A549 (cell line): ENCODE measurements at regions of chr14 and their contacts with region 1.

Region 1: GRCh38 chr14:22872033-22872832 is 693 bp downstream of the LRP10 start:
- DNase-seq: peak; percentile 87 to 90
- ATAC-seq: peak; percentile 72 to 82
- H3K4me3 ChIP-seq: peak overlapping the region; percentile 78
- H3K27ac ChIP-seq: peak overlapping the region; percentile 94 to 98
- H3K4me1 ChIP-seq: peaks cover 21% of the 10 kb centered on the region
- CTCF ChIP-seq: peak; percentile 91
- EP300 ChIP-seq: no peak
- POLR2A ChIP-seq: 0 out of 2 replicates have a peak, but pooled peaks have one; percentile 24
- RAD21 ChIP-seq: peak; percentile 69 to 75

Region 2: DNA sequence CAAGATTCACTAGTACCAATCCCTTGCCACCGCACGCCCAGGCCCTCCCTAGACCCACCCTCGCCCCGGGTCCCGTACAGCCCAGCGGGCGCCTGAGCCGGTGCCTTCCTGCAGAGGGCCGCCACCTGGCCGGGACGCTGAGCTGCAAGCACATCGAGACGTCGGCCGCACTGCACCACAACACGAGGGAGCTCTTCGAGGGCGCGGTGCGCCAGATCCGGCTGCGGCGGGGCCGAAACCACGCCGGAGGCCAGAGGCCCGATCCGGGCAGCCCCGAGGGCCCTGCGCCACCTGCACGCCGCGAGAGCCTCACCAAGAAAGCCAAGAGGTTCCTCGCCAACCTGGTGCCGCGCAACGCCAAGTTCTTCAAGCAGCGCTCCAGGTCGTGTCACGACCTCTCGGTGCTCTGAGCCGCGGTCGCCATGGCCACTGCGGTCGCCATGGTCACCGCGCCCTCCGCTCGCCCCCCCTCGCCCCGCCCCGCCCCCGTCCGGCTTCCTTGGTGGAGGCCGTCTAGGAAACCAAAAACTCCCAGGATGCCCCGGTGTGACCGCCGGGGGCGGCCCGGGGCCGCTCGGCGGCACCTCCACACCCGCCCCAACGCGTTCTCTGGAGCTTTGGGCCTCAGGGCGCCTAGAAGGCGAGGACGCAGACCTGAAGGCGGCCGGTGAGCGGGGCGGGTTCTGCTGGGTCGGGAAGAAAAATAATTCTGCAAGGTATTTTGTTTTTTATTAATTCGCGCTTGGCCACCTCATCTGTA is 14.4 kb after region 1 on chr14:
- CTCF ChIA-PET with region 1: interaction called, 368 read pairs
- POLR2A ChIA-PET with region 1: interaction called, 11 read pairs
- DNase-seq: peak; percentile 66 to 73
- ATAC-seq: peak; percentile 78 to 80
- H3K4me3 ChIP-seq: peak overlapping the region; percentile 61
- H3K27ac ChIP-seq: peak overlapping the region; percentile 87 to 93
- H3K4me1 ChIP-seq: peaks cover 18% of the 10 kb centered on the region
- CTCF ChIP-seq: no peak
- EP300 ChIP-seq: no peak
- POLR2A ChIP-seq: peak; percentile 65
- RAD21 ChIP-seq: no peak

Region 3: DNA sequence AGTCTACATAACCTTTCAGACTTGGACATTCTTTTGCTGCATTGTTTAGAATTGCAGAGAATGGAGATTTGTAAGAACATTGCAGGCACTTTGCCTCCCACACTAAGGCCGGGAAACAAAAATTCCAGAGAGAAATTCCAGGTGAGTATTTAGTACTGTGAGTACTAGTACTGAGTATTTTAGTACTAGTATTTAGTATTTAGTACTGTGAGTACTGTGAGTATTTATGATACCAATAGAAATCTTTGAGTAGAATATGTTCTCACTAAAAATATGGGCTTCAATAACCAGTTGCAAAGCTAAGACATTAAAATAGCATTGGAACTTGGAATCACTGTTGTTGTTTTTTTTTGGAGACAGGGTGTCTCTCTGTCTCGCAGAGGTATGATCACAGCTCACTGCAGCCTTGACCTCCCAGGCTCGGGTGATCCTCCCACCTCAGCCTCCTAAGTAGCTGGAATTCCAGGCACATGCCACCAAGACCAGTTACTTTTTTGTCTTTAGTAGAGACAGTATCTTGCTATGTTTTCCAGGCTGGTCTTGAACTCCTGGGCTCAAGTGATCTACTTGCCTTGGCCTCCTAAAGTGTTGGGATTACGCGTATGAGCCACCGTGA is 89.9 kb after region 1 on chr14:
- CTCF ChIA-PET with region 1: no interaction called
- POLR2A ChIA-PET with region 1: no interaction called
- DNase-seq: no peak
- ATAC-seq: no peak
- H3K4me3 ChIP-seq: no peak overlapping the region
- H3K27ac ChIP-seq: no peak overlapping the region
- H3K4me1 ChIP-seq: peaks cover 15% of the 10 kb centered on the region
- CTCF ChIP-seq: no peak
- EP300 ChIP-seq: no peak
- POLR2A ChIP-seq: no peak
- RAD21 ChIP-seq: no peak